ENCODE measurements at regions of chr9 and their contacts with region 1.

Region 1: DNA sequence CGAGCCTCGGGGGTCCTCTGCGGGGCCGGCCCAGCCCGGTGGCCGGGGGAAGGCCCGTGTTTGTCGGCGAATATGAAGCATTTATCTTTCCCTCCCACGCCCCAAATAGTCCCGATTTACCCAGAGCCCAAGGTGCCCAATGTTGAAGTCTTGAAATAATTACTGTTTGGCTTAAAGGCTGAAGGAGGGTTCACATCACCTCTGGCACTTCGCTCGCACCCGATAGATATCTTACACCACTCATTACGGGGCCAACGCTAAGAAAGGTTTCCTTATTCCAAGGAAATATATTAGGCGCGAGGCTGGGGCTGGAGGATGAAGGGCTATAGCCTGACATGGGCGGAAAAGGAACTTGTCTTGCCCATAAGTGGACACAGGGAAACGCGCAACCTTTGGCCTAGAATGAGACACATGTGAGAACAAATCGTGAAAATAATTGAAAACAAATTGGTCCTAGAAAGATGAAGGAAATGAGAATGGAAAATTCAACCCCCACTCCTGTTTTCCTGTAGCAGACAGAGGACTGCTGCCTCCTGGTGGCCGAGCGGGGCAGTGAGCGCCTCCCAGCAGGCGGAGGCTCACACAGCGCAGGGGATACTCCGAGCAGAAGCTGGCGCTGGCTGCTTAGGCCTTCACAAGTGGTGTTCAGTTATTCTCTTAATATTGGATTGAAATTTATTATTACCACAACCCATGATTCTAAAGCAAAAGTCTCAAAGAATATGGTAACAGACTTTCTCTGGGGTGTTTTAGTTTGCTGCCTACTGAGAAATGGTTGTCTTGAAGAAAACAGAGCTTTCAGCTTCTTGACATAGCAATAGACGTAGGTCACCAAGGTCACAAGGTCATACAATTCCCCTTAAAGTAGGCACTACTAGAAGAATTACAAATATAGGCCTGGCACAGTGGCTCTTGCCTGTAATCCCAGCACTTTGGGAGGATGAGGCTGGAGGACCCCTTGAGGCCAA is 7.9 kb downstream of the CCL21 start:
- DNase-seq: peak; percentile 88
- ATAC-seq: peak; percentile 82
- H3K4me3 Mint-ChIP-seq: peak overlapping the region; percentile 69
- H3K27ac Mint-ChIP-seq: peak overlapping the region; percentile 16
- H3K4me1 Mint-ChIP-seq: peaks cover 6% of the 10 kb centered on the region
- H3K27me3 Mint-ChIP-seq: peaks cover 12% of the 10 kb centered on the region
- CTCF ChIP-seq: peak; percentile 97

Region 2: GRCh38 chr9:34500623-34501267 is 201.3 kb before region 1 on chr9:
- CTCF ChIA-PET with region 1: no interaction called
- POLR2A ChIA-PET with region 1: no interaction called
- intact Hi-C with region 1: no loop called
- DNase-seq: peak; percentile 84
- ATAC-seq: peak; percentile 95
- H3K4me3 Mint-ChIP-seq: no peak overlapping the region
- H3K27ac Mint-ChIP-seq: no peak overlapping the region
- H3K4me1 Mint-ChIP-seq: peaks cover 3% of the 10 kb centered on the region
- H3K27me3 Mint-ChIP-seq: peaks cover 6% of the 10 kb centered on the region
- CTCF ChIP-seq: peak; percentile 97

Region 3: GRCh38 chr9:34637356-34638137 is 64.5 kb before region 1 on chr9 and contains the start of gene SIGMAR1:
- CTCF ChIA-PET with region 1: interaction called, 35 read pairs
- POLR2A ChIA-PET with region 1: no interaction called
- intact Hi-C with region 1: no loop called
- DNase-seq: peak; percentile 92
- ATAC-seq: peak; percentile 95
- H3K4me3 Mint-ChIP-seq: peak within 1 kb of the TSS; percentile 94
- H3K27ac Mint-ChIP-seq: peak within 1 kb of the TSS; percentile 90
- H3K4me1 Mint-ChIP-seq: peaks cover 36% of the 10 kb centered on the region
- H3K27me3 Mint-ChIP-seq: no peaks in the 10 kb centered on the region
- CTCF ChIP-seq: no peak
- total RNA-seq, gene SIGMAR1: 80.7 to 81.2 TPM

Region 4: GRCh38 chr9:34665381-34666250 is 36.4 kb before region 1 on chr9:
- CTCF ChIA-PET with region 1: interaction called, 47 read pairs
- POLR2A ChIA-PET with region 1: no interaction called
- intact Hi-C with region 1: no loop called
- DNase-seq: peak; percentile 91
- ATAC-seq: peak; percentile 81
- H3K4me3 Mint-ChIP-seq: peak overlapping the region; percentile 79
- H3K27ac Mint-ChIP-seq: peak overlapping the region; percentile 85
- H3K4me1 Mint-ChIP-seq: peaks cover 22% of the 10 kb centered on the region
- H3K27me3 Mint-ChIP-seq: no peaks in the 10 kb centered on the region
- CTCF ChIP-seq: no peak

Region 5: GRCh38 chr9:34686231-34686630 is 15.8 kb before region 1 on chr9:
- CTCF ChIA-PET with region 1: interaction called, 35 read pairs
- POLR2A ChIA-PET with region 1: no interaction called
- intact Hi-C with region 1: no loop called
- DNase-seq: no peak
- ATAC-seq: no peak
- H3K4me3 Mint-ChIP-seq: no peak overlapping the region
- H3K27ac Mint-ChIP-seq: no peak overlapping the region
- H3K4me1 Mint-ChIP-seq: peaks cover 6% of the 10 kb centered on the region
- H3K27me3 Mint-ChIP-seq: no peaks in the 10 kb centered on the region
- CTCF ChIP-seq: no peak

Region 6: DNA sequence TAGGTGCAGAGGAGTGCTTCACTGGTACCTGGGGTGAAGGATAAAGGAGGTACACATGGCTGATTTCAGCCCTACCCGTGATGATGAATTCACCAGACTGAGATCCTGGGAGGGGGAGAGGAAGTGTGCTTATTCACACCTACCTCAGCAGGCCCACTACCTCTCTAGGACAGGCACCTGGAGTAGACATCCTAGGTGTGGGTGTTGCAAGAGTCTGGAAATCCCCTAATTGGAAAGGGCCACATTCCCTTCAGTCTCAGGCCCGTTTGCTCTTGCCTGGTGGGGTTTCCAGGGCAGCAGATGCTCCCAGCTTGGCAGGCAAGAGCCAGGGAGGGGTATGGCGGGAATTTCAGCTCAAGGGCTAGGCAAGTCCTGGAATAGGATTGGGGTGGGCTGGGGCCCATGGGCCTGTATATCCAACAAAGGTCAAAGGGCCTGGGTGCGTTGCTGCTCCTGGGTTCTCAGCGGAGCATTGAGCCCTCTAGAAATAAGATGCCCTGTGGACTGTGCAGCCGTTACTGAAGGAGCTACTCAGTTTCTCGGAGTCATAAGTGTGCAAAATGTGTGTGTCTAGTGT is 13.7 kb after region 1 on chr9:
- CTCF ChIA-PET with region 1: interaction called, 37 read pairs
- POLR2A ChIA-PET with region 1: interaction called, 5 read pairs
- intact Hi-C with region 1: no loop called
- DNase-seq: no peak
- ATAC-seq: no peak
- H3K4me3 Mint-ChIP-seq: no peak overlapping the region
- H3K27ac Mint-ChIP-seq: no peak overlapping the region
- H3K4me1 Mint-ChIP-seq: no peaks in the 10 kb centered on the region
- H3K27me3 Mint-ChIP-seq: peaks cover 12% of the 10 kb centered on the region
- CTCF ChIP-seq: no peak

Measured in activated CD8-positive, alpha-beta T cell treated with anti-CD3 and anti-CD28 coated beads for 36 hours (primary cell).